Activated B cell treated with CpG ODN at 0.5 μM for 24 hours (primary cell): ENCODE measurements at regions of chr12 and their contacts with region 1.

Region 1: GRCh38 chr12:121688966-121689365 is 19.5 kb upstream of the MORN3 start:
- DNase-seq: no peak
- ATAC-seq: no peak
- H3K4me3 Mint-ChIP-seq: no peak overlapping the region
- H3K27ac Mint-ChIP-seq: no peak overlapping the region
- H3K4me1 Mint-ChIP-seq: peaks cover 7% of the 10 kb centered on the region
- H3K27me3 Mint-ChIP-seq: no peaks in the 10 kb centered on the region
- CTCF ChIP-seq: no peak

Region 2: GRCh38 chr12:121467115-121467793 is 221.7 kb before region 1 on chr12:
- CTCF ChIA-PET with region 1: no interaction called
- POLR2A ChIA-PET with region 1: interaction called, 6 read pairs
- intact Hi-C with region 1: loop called (anchors 1 kb)
- DNase-seq: peak; percentile 87
- ATAC-seq: peak; percentile 86
- H3K4me3 Mint-ChIP-seq: peak overlapping the region; percentile 41
- H3K27ac Mint-ChIP-seq: no peak overlapping the region
- H3K4me1 Mint-ChIP-seq: peaks cover 58% of the 10 kb centered on the region
- H3K27me3 Mint-ChIP-seq: no peaks in the 10 kb centered on the region
- CTCF ChIP-seq: no peak

Region 3: GRCh38 chr12:121668750-121669520 is 20.0 kb before region 1 on chr12:
- CTCF ChIA-PET with region 1: interaction called, 3 read pairs
- POLR2A ChIA-PET with region 1: interaction called, 5 read pairs
- intact Hi-C with region 1: loop called (anchors 2 kb)
- DNase-seq: peak; percentile 38
- ATAC-seq: no peak
- H3K4me3 Mint-ChIP-seq: no peak overlapping the region
- H3K27ac Mint-ChIP-seq: peak overlapping the region; percentile 14
- H3K4me1 Mint-ChIP-seq: peaks cover 49% of the 10 kb centered on the region
- H3K27me3 Mint-ChIP-seq: no peaks in the 10 kb centered on the region
- CTCF ChIP-seq: no peak

Region 4: DNA sequence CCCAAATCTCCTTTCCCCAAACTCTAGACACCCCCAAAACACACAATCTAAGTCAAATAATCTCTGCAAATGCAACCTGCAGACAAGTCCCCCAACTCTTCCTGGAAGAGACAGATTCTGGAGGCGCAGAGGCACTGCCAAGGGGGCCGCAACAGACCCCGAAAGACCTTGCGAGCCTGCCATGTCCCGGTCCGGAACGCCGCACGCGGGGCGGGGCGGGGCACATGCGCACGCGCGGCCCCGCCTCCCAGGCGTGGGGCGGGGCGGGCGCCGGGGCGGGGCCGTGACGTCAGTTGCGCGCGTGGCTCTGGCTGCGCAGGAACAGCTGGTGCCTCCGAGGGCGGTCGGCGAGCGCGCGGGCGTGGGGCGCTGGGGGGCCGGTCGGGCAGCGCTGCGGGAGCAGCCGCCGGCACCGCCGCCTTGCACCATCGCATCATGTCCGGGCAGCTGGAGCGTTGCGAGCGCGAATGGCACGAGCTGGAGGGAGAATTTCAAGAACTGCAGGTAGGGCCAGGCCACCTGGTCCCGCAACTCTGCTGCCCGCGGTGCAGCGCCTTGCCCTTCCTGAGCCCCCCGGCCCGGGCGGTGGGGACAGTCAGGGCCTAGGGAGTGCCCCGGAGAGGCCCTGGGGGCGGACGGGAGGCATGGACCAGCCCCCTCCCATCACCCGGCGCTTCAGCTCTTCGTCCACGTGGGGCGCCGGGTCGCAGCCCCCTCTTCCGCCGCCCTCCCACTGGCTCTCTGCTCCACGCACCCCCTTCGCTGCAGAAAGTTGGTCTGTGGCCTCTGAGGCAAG is 23.7 kb after region 1 on chr12 and contains the start of gene TMEM120B:
- CTCF ChIA-PET with region 1: no interaction called
- POLR2A ChIA-PET with region 1: interaction called, 4 read pairs
- intact Hi-C with region 1: loop called (anchors 1 kb)
- DNase-seq: peak; percentile 86
- ATAC-seq: peak; percentile 94
- H3K4me3 Mint-ChIP-seq: peak within 1 kb of the TSS; percentile 97
- H3K27ac Mint-ChIP-seq: peak within 1 kb of the TSS; percentile 90
- H3K4me1 Mint-ChIP-seq: peaks cover 32% of the 10 kb centered on the region
- H3K27me3 Mint-ChIP-seq: no peaks in the 10 kb centered on the region
- CTCF ChIP-seq: no peak
- total RNA-seq, gene TMEM120B: 7.3 and 8.3 TPM in 2 replicates

Region 5: GRCh38 chr12:121802846-121803630 is 114.1 kb after region 1 on chr12:
- CTCF ChIA-PET with region 1: no interaction called
- POLR2A ChIA-PET with region 1: interaction called, 11 read pairs
- intact Hi-C with region 1: no loop called
- DNase-seq: peak; percentile 91
- ATAC-seq: peak; percentile 40
- H3K4me3 Mint-ChIP-seq: peak overlapping the region; percentile 93
- H3K27ac Mint-ChIP-seq: peak overlapping the region; percentile 100
- H3K4me1 Mint-ChIP-seq: peaks cover 57% of the 10 kb centered on the region
- H3K27me3 Mint-ChIP-seq: no peaks in the 10 kb centered on the region
- CTCF ChIP-seq: no peak

Region 6: GRCh38 chr12:121839106-121839992 is 150.4 kb after region 1 on chr12:
- CTCF ChIA-PET with region 1: no interaction called
- POLR2A ChIA-PET with region 1: no interaction called
- intact Hi-C with region 1: loop called (anchors 1 kb)
- DNase-seq: peak; percentile 99
- ATAC-seq: peak; percentile 99
- H3K4me3 Mint-ChIP-seq: peak overlapping the region; percentile 97
- H3K27ac Mint-ChIP-seq: peak overlapping the region; percentile 88
- H3K4me1 Mint-ChIP-seq: peaks cover 15% of the 10 kb centered on the region
- H3K27me3 Mint-ChIP-seq: no peaks in the 10 kb centered on the region
- CTCF ChIP-seq: no peak